MCF 10A (cell line): ENCODE measurements at regions of chr2 and their contacts with region 1.

Region 1: GRCh38 chr2:174385201-174385600 is 10.3 kb upstream of the SCRN3 start:
- DNase-seq: no peak
- H3K4me3 Mint-ChIP-seq: no peak overlapping the region
- H3K27ac Mint-ChIP-seq: no peak overlapping the region
- H3K4me1 Mint-ChIP-seq: no peaks in the 10 kb centered on the region
- H3K27me3 Mint-ChIP-seq: no peaks in the 10 kb centered on the region
- CTCF ChIP-seq: no peak

Region 2: DNA sequence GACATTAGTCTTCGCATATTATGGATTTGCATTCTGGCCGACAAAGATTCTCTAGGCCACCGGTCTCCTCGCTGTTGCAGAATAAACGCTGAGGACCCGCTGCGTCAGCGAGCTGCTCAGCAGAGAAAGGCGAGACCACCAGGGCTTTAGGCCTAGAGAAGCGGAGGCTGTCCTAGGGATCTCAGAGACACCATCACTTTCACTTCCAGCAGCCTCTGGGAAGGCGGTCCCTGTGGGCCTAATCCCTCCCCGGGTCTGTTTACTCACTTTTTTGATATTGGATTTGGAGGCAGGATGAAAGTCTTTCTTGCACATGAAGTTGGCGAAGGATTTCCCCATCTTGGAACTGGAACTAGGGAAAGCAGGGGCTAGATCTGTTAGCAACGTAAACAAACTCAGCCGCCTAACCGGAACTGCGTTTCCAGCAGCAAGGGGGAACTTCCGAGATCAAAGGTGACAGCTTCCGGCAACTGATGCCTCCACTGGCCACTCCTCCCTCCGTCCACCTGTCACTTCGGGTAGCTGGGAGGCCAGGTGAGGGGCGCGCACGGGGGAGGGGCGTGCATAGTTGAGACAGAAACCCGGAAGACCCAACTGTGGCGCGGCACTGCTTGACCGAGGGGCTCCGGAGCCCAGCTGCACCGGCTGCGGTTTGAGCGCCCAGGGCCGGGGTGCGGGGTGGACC is 10.2 kb after region 1 on chr2 and contains the start of gene SCRN3:
- CTCF ChIA-PET with region 1: interaction called, 5 read pairs
- POLR2A ChIA-PET with region 1: interaction called, 22 read pairs
- intact Hi-C with region 1: no loop called
- DNase-seq: peak; percentile 78
- H3K4me3 Mint-ChIP-seq: peak within 1 kb of the TSS; percentile 99
- H3K27ac Mint-ChIP-seq: peak within 1 kb of the TSS; percentile 99
- H3K4me1 Mint-ChIP-seq: peaks cover 20% of the 10 kb centered on the region
- H3K27me3 Mint-ChIP-seq: no peaks in the 10 kb centered on the region
- CTCF ChIP-seq: no peak
- total RNA-seq, gene SCRN3: 27.3 and 28.2 TPM in 2 replicates

Region 3: DNA sequence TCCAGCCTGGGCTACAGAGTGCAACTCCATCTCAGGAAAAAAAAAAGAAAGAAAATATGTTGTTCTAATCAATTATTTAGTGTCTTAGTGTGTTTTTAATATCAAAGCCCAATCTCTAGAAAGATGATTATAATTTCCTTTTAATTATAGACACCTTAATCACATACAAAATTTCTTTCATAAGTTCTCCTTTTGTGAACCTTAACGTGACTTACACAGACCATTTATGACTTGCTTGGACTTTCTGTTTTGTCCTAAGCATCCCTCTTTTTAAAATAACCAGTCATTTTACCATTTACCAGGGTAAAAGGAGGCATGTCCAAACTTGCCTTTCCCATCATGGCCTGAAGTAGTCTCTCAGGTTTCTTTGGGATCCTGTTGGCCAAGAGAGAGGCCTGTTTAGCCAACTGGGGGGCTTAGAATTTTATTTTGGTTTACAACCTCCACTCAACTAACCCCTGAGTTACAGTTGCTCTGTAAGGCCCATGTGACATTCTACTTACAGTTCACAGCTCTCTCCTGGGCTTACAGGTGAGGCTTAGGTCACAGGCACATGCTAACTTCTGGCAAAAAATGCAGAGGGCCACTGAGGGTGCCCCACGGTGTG is 125.5 kb after region 1 on chr2:
- CTCF ChIA-PET with region 1: no interaction called
- POLR2A ChIA-PET with region 1: no interaction called
- intact Hi-C with region 1: no loop called
- DNase-seq: peak; percentile 53
- H3K4me3 Mint-ChIP-seq: no peak overlapping the region
- H3K27ac Mint-ChIP-seq: no peak overlapping the region
- H3K4me1 Mint-ChIP-seq: no peaks in the 10 kb centered on the region
- H3K27me3 Mint-ChIP-seq: no peaks in the 10 kb centered on the region
- CTCF ChIP-seq: no peak